HepG2 (cell line): ENCODE measurements at regions of chr15 and their contacts with region 1.

Region 1: GRCh38 chr15:62782039-62782791 is 260.3 kb upstream of the TPM1 start:
- DNase-seq: peak; percentile 78
- ATAC-seq: peak; percentile 97
- H3K4me3 ChIP-seq: no peak overlapping the region
- H3K27ac ChIP-seq: no peak overlapping the region
- H3K4me1 ChIP-seq: peaks cover 38% of the 10 kb centered on the region
- H3K27me3 ChIP-seq: no peaks in the 10 kb centered on the region
- CTCF ChIP-seq: peak; percentile 94
- EP300 ChIP-seq: no peak
- POLR2A ChIP-seq: no peak
- RAD21 ChIP-seq: peak; percentile 95

Region 2: GRCh38 chr15:62821384-62822131 is 39.3 kb after region 1 on chr15:
- CTCF ChIA-PET with region 1: no interaction called
- POLR2A ChIA-PET with region 1: no interaction called
- in situ Hi-C with region 1: no loop called
- intact Hi-C with region 1: no loop called
- DNase-seq: peak; percentile 86
- ATAC-seq: peak; percentile 90
- H3K4me3 ChIP-seq: 0 out of 6 replicates have a peak overlapping the region, but pooled peaks of 1 of the 3 experiments have one; percentile 4
- H3K27ac ChIP-seq: peak overlapping the region; percentile 83
- H3K4me1 ChIP-seq: peaks cover 71% of the 10 kb centered on the region
- H3K27me3 ChIP-seq: no peaks in the 10 kb centered on the region
- CTCF ChIP-seq: no peak
- EP300 ChIP-seq: peak in 1 of 2 experiments; percentile 44; a peak in 1 of 4 replicates
- POLR2A ChIP-seq: peak in 1 of 2 experiments; percentile 37; a peak in 1 of 4 replicates
- RAD21 ChIP-seq: no peak

Region 3: DNA sequence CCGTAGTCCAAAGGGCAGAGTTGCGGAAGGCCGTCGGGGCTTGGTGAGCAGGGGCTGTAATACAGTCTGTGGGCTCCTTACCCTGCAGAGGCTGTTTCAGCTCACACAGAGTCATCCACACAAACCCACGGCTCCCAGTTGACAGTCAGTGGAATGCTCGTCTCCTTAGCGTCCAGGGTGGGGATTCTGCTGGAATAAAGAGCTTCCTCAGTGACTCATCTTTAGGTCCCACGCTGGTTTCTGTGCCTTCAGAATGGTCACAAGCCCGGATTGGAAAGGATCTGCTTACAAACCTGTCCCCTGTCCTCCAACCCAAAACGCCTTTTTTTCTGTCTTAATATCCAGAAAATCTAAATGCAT is 59.0 kb after region 1 on chr15:
- CTCF ChIA-PET with region 1: no interaction called
- POLR2A ChIA-PET with region 1: interaction called, 3 read pairs
- in situ Hi-C with region 1: loop called (anchors 5 kb)
- intact Hi-C with region 1: loop called (anchors 5 kb)
- DNase-seq: no peak
- ATAC-seq: no peak
- H3K4me3 ChIP-seq: no peak overlapping the region
- H3K27ac ChIP-seq: no peak overlapping the region
- H3K4me1 ChIP-seq: peaks cover 18% of the 10 kb centered on the region
- H3K27me3 ChIP-seq: no peaks in the 10 kb centered on the region
- CTCF ChIP-seq: no peak
- EP300 ChIP-seq: no peak
- POLR2A ChIP-seq: no peak
- RAD21 ChIP-seq: no peak

Region 4: DNA sequence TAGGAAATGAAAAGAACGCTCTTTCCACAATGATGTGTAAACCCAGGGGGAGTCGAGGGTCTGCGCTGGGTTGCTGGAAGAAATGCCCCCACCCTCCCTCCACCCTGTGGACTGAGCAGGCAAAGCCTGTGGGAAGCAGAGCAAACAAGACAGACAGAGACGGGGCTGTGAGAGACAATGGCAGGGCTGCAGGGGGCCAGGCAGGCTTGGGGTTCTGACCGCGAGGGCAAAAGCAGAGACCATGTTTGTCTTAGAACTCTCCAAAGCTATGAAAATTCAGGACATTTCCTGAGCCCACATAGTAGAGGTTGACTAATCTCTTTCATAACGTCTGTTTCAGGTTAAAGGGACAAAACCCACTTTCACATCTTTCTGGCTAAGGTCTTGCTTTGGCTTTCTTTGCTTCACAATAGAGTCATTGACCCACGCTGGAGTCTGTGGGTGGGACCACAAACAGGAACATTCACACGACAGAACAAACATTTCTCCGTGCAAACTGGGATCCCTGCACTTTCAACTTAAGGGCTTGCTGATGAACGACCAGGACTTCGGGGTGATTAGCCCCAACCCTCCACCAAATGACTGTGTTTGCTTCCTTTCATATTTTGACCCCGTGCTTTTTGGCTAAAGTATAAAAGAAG is 104.3 kb after region 1 on chr15:
- CTCF ChIA-PET with region 1: no interaction called
- POLR2A ChIA-PET with region 1: no interaction called
- in situ Hi-C with region 1: no loop called
- intact Hi-C with region 1: loop called (anchors 1 kb)
- DNase-seq: peak; percentile 97
- ATAC-seq: peak; percentile 94
- H3K4me3 ChIP-seq: peak overlapping the region; percentile 51 to 72 (median 57)
- H3K27ac ChIP-seq: peak overlapping the region; percentile 89
- H3K4me1 ChIP-seq: peaks cover 70% of the 10 kb centered on the region
- H3K27me3 ChIP-seq: no peaks in the 10 kb centered on the region
- CTCF ChIP-seq: peak; percentile 52
- EP300 ChIP-seq: peak; percentile 61 to 92; a peak in 3 of 4 replicates
- POLR2A ChIP-seq: peak in 1 of 2 experiments; percentile 35; a peak in 1 of 4 replicates
- RAD21 ChIP-seq: 0 out of 2 replicates have a peak, but pooled peaks have one; percentile 23

Region 5: DNA sequence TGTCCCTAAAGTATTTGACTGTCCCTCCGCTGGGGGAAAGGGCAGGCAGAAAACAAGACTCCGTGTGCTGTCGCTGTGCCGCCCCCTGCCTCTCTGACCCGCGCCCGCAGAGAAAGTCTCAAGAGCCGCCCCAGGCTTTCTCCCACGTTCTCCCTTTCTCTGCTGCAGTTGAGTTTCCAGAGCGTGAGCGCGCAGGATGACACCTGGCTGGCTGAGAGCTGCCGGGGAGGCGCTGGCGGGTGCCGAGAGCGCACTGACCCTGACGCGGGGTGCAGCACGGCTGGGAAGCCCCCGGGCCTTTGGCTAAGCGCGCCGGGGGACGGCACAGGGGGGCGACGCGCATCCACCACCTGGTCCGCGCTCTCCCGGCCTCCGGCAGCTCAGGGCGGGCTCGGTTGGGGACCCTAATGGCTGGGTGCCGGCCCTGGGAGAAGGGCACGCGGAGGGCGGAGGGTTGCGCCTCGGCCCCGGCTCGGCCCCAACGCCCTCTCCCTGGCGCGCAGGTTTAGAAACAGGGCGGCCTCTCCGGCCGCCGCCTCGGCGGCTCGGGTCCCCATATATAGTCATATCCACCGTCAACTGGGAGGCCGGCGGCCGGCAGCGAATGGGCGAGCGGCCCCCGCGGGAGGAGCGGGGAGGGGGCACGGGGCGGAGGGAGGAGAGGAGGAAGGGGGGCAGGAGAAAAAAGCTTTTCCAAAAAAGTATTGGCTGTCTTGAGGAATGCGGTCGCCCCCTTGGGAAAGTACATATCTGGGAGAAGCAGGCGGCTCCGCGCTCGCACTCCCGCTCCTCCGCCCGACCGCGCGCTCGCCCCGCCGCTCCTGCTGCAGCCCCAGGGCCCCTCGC is 260.0 kb after region 1 on chr15 and contains the start of gene TPM1:
- CTCF ChIA-PET with region 1: no interaction called
- POLR2A ChIA-PET with region 1: interaction called, 3 read pairs
- in situ Hi-C with region 1: loop called (anchors 5 kb)
- intact Hi-C with region 1: loop called (anchors 1 kb)
- DNase-seq: peak; percentile 73
- ATAC-seq: peak; percentile 89
- H3K4me3 ChIP-seq: peak within 1 kb of the TSS; percentile 80 to 92 (median 89)
- H3K27ac ChIP-seq: peak within 1 kb of the TSS; percentile 49
- H3K4me1 ChIP-seq: peaks cover 50% of the 10 kb centered on the region
- H3K27me3 ChIP-seq: no peaks in the 10 kb centered on the region
- CTCF ChIP-seq: peak; percentile 52
- EP300 ChIP-seq: no peak
- POLR2A ChIP-seq: peak; percentile 0 to 66; a peak in 2 of 4 replicates
- RAD21 ChIP-seq: no peak
- total RNA-seq, gene TPM1: 98.9 and 113 TPM in 2 replicates

Region 6: GRCh38 chr15:63093486-63094205 is 311.4 kb after region 1 on chr15:
- CTCF ChIA-PET with region 1: interaction called, 8 read pairs
- POLR2A ChIA-PET with region 1: no interaction called
- in situ Hi-C with region 1: loop called (anchors 10 kb)
- intact Hi-C with region 1: loop called (anchors 1 kb)
- DNase-seq: peak; percentile 77
- ATAC-seq: peak; percentile 94
- H3K4me3 ChIP-seq: no peak overlapping the region
- H3K27ac ChIP-seq: no peak overlapping the region
- H3K4me1 ChIP-seq: peaks cover 61% of the 10 kb centered on the region
- H3K27me3 ChIP-seq: no peaks in the 10 kb centered on the region
- CTCF ChIP-seq: peak; percentile 97
- EP300 ChIP-seq: peak in 1 of 2 experiments; percentile 42; a peak in 1 of 4 replicates
- POLR2A ChIP-seq: no peak
- RAD21 ChIP-seq: peak; percentile 98

Region 7: GRCh38 chr15:63402498-63403253 is 620.5 kb after region 1 on chr15:
- CTCF ChIA-PET with region 1: no interaction called
- POLR2A ChIA-PET with region 1: no interaction called
- in situ Hi-C with region 1: loop called (anchors 25 kb)
- intact Hi-C with region 1: no loop called
- DNase-seq: peak; percentile 23
- ATAC-seq: peak; percentile 73
- H3K4me3 ChIP-seq: no peak overlapping the region
- H3K27ac ChIP-seq: no peak overlapping the region
- H3K4me1 ChIP-seq: peaks cover 36% of the 10 kb centered on the region
- H3K27me3 ChIP-seq: peaks cover 2 to 3% of the 10 kb centered on the region in 2 experiments; a peak in 2 of 5 replicates
- CTCF ChIP-seq: peak; percentile 55
- EP300 ChIP-seq: no peak
- POLR2A ChIP-seq: no peak
- RAD21 ChIP-seq: no peak